ENCODE measurements at regions of chr17 and their contacts with region 1.

Region 1: DNA sequence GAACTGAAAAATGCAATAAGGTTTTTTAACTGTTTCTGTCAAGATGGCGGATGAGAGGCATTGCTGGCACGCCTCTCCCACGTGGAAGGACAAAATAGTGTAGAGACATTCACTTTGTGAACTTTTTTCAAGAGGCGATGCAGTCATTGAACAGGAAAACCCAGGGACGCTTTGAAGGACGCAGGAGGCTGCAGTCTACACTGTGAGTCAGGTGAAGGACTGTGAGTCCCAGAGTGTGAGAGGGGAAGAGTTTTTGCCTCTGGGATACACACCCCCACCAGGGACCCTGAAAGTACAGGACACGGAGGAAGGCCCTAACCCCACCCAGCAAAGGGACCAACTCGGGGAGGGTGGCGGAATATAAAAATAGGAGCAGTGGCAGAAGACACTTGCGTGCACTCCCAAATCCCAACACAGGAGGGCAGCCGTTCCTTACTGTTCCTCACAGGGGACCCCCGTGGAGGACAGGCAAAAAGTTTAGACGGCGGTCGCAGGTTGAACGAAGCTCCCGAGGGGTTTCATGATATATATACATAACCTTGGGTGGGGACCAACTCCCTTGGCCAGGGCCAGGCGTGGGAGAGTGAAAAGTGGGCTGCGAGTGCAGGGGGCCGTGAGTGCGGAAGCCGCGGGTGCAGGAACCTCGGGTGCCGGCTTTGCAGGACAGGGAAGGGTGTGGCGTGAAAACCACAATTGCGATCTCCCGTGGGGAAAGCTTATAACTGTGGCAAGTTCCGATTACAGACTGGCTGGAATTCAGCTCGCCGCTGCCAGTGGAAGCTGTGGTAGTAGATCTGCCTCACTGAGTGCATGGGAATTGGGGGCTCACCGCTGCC is 82.0 kb upstream of the ALOX12 start:
- DNase-seq: no peak
- ATAC-seq: peak; percentile 92
- H3K4me3 ChIP-seq: no peak overlapping the region
- H3K27ac ChIP-seq: no peak overlapping the region
- H3K4me1 ChIP-seq: peaks cover 4% of the 10 kb centered on the region; the same call in 1 of the 2 replicates
- H3K27me3 ChIP-seq: no peaks in the 10 kb centered on the region
- CTCF ChIP-seq: peak; percentile 74 to 90 (median 87)
- EP300 ChIP-seq: no peak
- POLR2A ChIP-seq: no peak
- RAD21 ChIP-seq: peak; percentile 91

Region 2: GRCh38 chr17:6666077-6666521 is 247.7 kb before region 1 on chr17:
- CTCF ChIA-PET with region 1: interaction called, 7 read pairs
- POLR2A ChIA-PET with region 1: no interaction called
- RAD21 ChIA-PET with region 1: no interaction called
- SMC1A ChIA-PET with region 1: interaction called, 9 read pairs
- in situ Hi-C with region 1: no loop called
- intact Hi-C with region 1: loop called (anchors 5 kb)
- DNase-seq: no peak
- ATAC-seq: peak; percentile 96
- H3K4me3 ChIP-seq: no peak overlapping the region
- H3K27ac ChIP-seq: no peak overlapping the region
- H3K4me1 ChIP-seq: peaks cover 4% of the 10 kb centered on the region
- H3K27me3 ChIP-seq: no peaks in the 10 kb centered on the region
- CTCF ChIP-seq: peak; percentile 86 to 96 (median 92)
- EP300 ChIP-seq: no peak
- POLR2A ChIP-seq: no peak
- RAD21 ChIP-seq: peak; percentile 98

Region 3: DNA sequence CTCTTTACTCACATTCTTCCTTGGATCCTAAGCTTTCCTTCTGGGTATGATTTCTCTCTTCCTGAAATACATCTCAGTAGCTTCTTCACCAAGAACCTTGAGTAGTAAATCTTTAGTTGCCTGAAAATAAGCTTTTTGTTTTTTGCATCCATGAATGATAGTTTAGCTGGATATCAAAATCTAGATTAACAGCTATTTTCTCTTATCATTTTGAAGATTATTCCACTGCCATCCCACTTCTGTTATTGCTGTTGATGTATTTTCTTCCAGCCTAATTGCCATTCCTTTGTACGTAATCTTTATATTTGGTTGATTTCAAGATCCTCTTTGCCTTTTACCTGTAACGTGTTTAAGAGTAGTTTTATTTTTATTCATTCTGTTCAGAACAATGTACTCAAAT is 145.4 kb before region 1 on chr17:
- CTCF ChIA-PET with region 1: no interaction called
- POLR2A ChIA-PET with region 1: no interaction called
- RAD21 ChIA-PET with region 1: no interaction called
- SMC1A ChIA-PET with region 1: no interaction called
- in situ Hi-C with region 1: no loop called
- intact Hi-C with region 1: no loop called
- DNase-seq: no peak
- ATAC-seq: no peak
- H3K4me3 ChIP-seq: no peak overlapping the region
- H3K27ac ChIP-seq: no peak overlapping the region
- H3K4me1 ChIP-seq: no peaks in the 10 kb centered on the region
- H3K27me3 ChIP-seq: no peaks in the 10 kb centered on the region
- CTCF ChIP-seq: no peak
- EP300 ChIP-seq: no peak
- POLR2A ChIP-seq: no peak
- RAD21 ChIP-seq: no peak

Region 4: DNA sequence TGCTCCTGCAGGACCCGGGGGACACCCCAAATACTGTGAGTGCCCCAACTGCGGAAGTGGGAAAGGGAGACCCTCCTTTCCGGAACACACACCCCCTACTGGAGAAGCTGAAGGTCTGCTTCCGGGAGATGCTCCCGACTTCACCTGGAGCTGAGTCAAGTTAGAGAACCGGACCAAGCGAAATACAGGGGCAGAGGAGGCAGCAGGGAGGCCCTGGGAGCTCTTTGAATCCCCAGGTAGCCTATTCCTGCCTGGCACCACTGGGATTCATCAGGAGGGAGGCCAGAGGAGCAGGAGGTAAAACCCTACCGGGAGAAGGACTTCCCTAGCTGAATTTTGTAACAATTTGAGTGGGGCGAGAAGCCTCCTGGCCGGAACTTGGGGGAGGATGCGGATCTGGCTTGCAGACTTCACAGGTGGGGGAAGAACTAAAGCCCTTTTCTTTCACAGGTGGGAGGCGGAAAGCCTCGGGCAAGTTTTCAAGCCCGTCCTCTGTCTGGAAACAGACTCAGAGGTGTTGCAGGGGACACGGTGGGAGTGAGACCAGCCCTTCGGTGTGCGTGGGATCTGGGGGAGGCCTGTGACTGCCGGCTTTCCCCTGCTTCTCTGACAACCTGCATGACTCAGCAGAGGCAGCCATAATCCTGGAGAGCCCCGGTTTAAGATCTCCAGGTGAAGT is 59.9 kb before region 1 on chr17:
- CTCF ChIA-PET with region 1: interaction called, 17 read pairs
- POLR2A ChIA-PET with region 1: no interaction called
- RAD21 ChIA-PET with region 1: no interaction called
- SMC1A ChIA-PET with region 1: interaction called, 3 read pairs
- in situ Hi-C with region 1: no loop called
- intact Hi-C with region 1: no loop called
- DNase-seq: no peak
- ATAC-seq: peak; percentile 83
- H3K4me3 ChIP-seq: peak overlapping the region; percentile 48; the same call in 1 of the 2 replicates
- H3K27ac ChIP-seq: 0 out of 2 replicates have a peak overlapping the region, but pooled peaks have one; percentile 19
- H3K4me1 ChIP-seq: no peaks in the 10 kb centered on the region
- H3K27me3 ChIP-seq: no peaks in the 10 kb centered on the region
- CTCF ChIP-seq: peak; percentile 14 to 36 (median 14); a peak in 2 of 6 replicates
- EP300 ChIP-seq: no peak
- POLR2A ChIP-seq: no peak
- RAD21 ChIP-seq: no peak

Region 5: DNA sequence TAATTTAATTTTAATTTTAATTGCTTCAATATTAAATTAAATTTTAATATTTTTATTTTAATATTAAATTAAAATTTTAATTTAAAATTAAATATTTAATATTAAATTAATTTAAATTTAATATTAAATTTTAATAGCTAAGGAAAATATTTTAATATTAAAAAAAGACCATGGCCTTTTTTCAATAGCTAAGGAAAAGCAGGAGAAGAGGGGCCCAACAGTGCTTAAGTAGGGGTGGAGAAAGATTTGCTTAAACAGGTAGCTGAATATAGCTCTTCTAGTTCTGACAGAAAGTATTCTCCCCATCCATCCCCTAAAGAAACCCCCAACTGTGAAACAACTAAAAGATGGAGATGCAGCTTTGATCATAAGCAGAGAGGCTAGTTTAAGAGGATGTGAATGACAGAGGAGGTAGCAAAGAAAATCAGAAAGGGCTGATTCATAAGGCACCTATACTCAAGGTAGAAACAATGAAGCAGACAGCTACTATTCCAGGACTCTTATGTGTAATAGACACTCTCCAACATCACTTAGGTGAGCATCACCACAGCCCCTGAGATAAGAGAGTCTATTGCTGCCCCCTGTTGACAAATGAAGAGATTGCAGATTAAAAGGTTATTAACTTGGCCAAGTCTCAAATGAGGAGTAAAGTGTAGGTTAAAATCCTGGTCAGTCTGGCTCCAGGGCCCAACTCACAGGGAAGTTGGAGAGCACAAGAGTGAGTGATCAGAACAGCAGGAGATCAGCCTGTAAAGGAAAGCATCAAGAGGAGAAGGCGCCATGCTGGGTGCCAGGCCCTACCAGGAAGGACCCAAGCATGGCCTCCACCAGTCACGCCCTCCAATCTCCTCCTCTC is 90.8 kb after region 1 on chr17:
- CTCF ChIA-PET with region 1: interaction called, 237 read pairs
- POLR2A ChIA-PET with region 1: interaction called, 3 read pairs
- RAD21 ChIA-PET with region 1: interaction called, 61 read pairs
- SMC1A ChIA-PET with region 1: interaction called, 67 read pairs
- in situ Hi-C with region 1: loop called (anchors 5 kb)
- intact Hi-C with region 1: loop called (anchors 1 kb)
- DNase-seq: peak; percentile 26
- ATAC-seq: peak; percentile 93
- H3K4me3 ChIP-seq: no peak overlapping the region
- H3K27ac ChIP-seq: no peak overlapping the region
- H3K4me1 ChIP-seq: no peaks in the 10 kb centered on the region
- H3K27me3 ChIP-seq: no peaks in the 10 kb centered on the region
- CTCF ChIP-seq: peak; percentile 56 to 75 (median 73); a peak in 5 of 6 replicates
- EP300 ChIP-seq: no peak
- POLR2A ChIP-seq: no peak
- RAD21 ChIP-seq: peak; percentile 89

Region 6: DNA sequence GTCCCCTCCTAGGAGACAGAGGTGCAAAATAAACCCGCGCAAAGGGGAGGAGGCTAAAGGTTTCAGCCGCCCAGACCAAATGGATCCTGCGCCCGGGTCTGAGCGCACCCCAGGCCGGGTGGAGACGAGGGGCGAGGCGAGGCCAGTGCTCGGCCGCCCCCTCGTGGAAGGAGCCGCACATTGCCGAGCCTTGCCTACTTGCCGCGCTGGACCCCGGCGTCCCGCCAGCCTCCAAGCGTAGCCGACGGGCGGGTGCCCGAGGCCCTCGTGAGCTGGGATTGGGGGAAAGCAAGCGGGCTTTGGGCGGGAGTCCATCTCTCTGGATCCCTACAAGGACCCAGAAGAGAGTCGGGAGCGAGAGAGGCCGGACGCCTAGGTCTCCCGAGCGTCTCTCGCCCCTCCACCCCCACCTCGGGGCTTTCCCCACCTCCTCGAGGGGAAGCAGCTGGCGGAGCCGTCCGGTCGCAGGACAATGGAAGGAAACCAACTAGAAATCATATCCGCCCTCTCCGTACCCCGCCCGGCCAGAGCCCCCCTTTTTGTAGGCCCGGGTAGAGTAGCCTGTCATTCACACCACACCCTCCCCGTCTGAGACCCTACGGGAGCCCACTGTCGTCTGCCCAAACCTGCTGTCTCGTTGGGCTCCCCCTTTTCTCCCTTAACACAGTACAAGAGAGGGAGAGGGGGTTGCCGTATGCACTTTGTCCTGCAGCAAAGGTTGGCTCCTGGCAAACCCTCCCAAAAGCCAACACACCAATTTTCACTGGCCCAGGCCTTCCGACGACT is 108.4 kb after region 1 on chr17:
- CTCF ChIA-PET with region 1: interaction called, 49 read pairs
- POLR2A ChIA-PET with region 1: interaction called, 3 read pairs
- RAD21 ChIA-PET with region 1: interaction called, 39 read pairs
- SMC1A ChIA-PET with region 1: interaction called, 18 read pairs
- in situ Hi-C with region 1: no loop called
- intact Hi-C with region 1: loop called (anchors 1 kb)
- DNase-seq: no peak
- ATAC-seq: peak; percentile 86
- H3K4me3 ChIP-seq: peak overlapping the region; percentile 40; the same call in 1 of the 2 replicates
- H3K27ac ChIP-seq: peak overlapping the region; percentile 18; the same call in 1 of the 2 replicates
- H3K4me1 ChIP-seq: peaks cover 25% of the 10 kb centered on the region
- H3K27me3 ChIP-seq: no peaks in the 10 kb centered on the region
- CTCF ChIP-seq: peak; percentile 93 to 96 (median 96)
- EP300 ChIP-seq: no peak
- POLR2A ChIP-seq: peak; percentile 31; the same call in 1 of the 2 replicates
- RAD21 ChIP-seq: peak; percentile 72

Region 7: GRCh38 chr17:7177196-7177953 is 263.5 kb after region 1 on chr17:
- CTCF ChIA-PET with region 1: interaction called, 10 read pairs
- POLR2A ChIA-PET with region 1: no interaction called
- RAD21 ChIA-PET with region 1: interaction called, 11 read pairs
- SMC1A ChIA-PET with region 1: no interaction called
- in situ Hi-C with region 1: no loop called
- intact Hi-C with region 1: loop called (anchors 10 kb)
- DNase-seq: no peak
- ATAC-seq: peak; percentile 95
- H3K4me3 ChIP-seq: no peak overlapping the region
- H3K27ac ChIP-seq: no peak overlapping the region
- H3K4me1 ChIP-seq: peaks cover 6% of the 10 kb centered on the region
- H3K27me3 ChIP-seq: peaks cover 2 to 6% of the 10 kb centered on the region in 2 experiments; a peak in 3 of 4 replicates
- CTCF ChIP-seq: peak; percentile 87 to 89 (median 87)
- EP300 ChIP-seq: no peak
- POLR2A ChIP-seq: no peak
- RAD21 ChIP-seq: peak; percentile 60

Region 8: DNA sequence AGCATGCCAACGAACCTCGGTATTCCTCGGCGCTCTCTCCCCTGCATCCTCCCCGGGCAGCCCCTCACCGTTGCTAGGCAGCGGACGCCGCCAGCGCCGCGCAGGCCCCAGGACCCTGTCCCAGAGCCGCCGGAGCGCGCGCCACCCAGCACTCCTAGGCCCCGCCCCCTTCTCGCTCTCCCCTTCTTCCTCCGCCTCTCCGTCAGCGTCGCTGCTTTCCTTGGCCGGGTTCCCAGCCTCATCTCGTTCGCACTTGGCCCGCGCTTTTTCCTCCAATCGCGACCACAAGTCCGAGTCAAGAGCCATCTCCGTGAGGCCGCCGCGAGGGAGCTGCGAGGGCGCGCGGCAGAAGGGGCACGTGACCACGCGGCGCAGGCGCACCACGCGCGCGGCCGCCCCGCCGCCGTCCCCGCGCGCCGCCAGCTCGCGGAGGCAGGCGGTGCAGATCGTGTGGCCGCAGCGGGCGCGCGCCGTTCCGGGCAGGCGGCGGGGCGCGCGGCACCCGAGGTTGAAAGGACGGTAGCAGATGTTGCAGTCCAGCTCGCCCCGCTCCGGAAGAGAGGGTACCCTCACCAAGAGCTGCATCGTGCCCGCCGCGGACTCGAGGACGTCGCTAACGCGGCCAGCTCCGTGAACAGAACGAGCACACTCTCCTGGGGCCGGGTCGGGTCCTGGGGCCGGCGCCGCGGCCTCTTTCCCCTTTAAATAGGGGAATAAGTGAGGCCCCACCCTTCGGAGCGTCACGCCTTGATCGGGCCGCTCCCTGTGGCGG is 1002.0 kb after region 1 on chr17 and contains the start of gene RNF227:
- CTCF ChIA-PET with region 1: no interaction called
- POLR2A ChIA-PET with region 1: no interaction called
- RAD21 ChIA-PET with region 1: no interaction called
- SMC1A ChIA-PET with region 1: no interaction called
- in situ Hi-C with region 1: no loop called
- intact Hi-C with region 1: no loop called
- DNase-seq: peak; percentile 57
- ATAC-seq: peak; percentile 87
- H3K4me3 ChIP-seq: peak within 1 kb of the TSS; percentile 76
- H3K27ac ChIP-seq: peak within 1 kb of the TSS; percentile 34
- H3K4me1 ChIP-seq: peaks cover 10% of the 10 kb centered on the region
- H3K27me3 ChIP-seq: no peaks in the 10 kb centered on the region
- CTCF ChIP-seq: 0 out of 6 replicates have a peak, but pooled peaks of 1 of the 3 experiments have one; percentile 6
- EP300 ChIP-seq: no peak
- POLR2A ChIP-seq: peak; percentile 71
- RAD21 ChIP-seq: no peak
- polyA plus RNA-seq, gene RNF227: 0.49 to 0.87 TPM